ENCODE measurements at regions of chr1 and their contacts with region 1.

Region 1: DNA sequence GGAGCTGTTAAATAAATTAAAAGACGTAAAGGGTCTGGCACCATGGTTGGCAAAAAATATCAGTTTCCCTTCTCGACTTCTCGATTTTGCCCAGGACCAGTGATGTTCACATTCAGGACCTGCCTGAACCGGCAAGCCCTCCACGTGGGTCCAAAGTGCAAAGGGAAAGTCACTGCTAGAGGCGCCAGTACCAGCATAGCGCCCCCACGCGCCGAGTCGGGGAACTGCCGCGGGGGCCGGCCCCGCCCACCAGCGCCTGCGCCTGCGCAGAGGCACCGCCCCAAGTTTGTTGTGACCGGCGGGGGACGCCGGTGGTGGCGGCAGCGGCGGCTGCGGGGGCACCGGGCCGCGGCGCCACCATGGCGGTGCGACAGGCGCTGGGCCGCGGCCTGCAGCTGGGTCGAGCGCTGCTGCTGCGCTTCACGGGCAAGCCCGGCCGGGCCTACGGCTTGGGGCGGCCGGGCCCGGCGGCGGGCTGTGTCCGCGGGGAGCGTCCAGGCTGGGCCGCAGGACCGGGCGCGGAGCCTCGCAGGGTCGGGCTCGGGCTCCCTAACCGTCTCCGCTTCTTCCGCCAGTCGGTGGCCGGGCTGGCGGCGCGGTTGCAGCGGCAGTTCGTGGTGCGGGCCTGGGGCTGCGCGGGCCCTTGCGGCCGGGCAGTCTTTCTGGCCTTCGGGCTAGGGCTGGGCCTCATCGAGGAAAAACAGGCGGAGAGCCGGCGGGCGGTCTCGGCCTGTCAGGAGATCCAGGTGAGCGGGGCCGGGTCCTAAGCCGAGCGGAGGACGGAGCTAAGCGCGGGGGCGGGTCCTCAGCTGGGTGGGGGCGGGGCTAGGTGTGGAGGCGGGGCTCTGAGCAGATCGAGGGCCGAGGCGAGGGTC is at the start of gene PINK1:
- DNase-seq: peak; percentile 93
- H3K4me3 Mint-ChIP-seq: peak within 1 kb of the TSS; percentile 79
- H3K27ac Mint-ChIP-seq: peak within 1 kb of the TSS; percentile 33
- H3K4me1 Mint-ChIP-seq: peaks cover 10% of the 10 kb centered on the region
- H3K27me3 Mint-ChIP-seq: peaks cover 2% of the 10 kb centered on the region
- total RNA-seq, gene PINK1: 4.4 to 4.8 TPM

Region 2: DNA sequence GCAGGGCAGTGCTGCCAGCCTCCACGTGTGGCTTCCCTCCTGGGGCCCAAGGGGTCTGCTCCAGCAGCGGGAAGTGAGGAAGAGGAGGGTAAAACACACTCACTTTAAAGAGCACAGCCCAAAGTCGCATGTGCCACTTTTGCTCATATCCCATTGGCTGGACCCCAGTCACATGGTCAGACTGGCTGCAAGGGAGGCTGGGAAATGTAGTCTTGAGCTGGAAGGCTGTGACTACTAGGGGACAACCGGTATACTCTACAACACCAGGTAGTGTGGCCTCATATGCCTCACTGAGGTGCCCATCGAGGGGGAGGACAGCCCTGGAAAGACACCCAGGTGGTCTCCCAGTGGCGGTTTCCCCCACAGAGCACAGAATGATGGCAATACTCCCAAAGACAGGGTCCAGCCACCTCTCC is 192.6 kb before region 1 on chr1:
- CTCF ChIA-PET with region 1: no interaction called
- POLR2A ChIA-PET with region 1: no interaction called
- intact Hi-C with region 1: no loop called
- DNase-seq: peak; percentile 68
- H3K4me3 Mint-ChIP-seq: no peak overlapping the region
- H3K27ac Mint-ChIP-seq: no peak overlapping the region
- H3K4me1 Mint-ChIP-seq: no peaks in the 10 kb centered on the region
- H3K27me3 Mint-ChIP-seq: peaks cover 12% of the 10 kb centered on the region

Region 3: GRCh38 chr1:20507564-20508410 is 125.6 kb before region 1 on chr1 and contains the start of gene MUL1:
- CTCF ChIA-PET with region 1: no interaction called
- POLR2A ChIA-PET with region 1: no interaction called
- intact Hi-C with region 1: loop called (anchors 5 kb)
- DNase-seq: peak; percentile 97
- H3K4me3 Mint-ChIP-seq: peak within 1 kb of the TSS; percentile 89
- H3K27ac Mint-ChIP-seq: peak within 1 kb of the TSS; percentile 78
- H3K4me1 Mint-ChIP-seq: peaks cover 16% of the 10 kb centered on the region
- H3K27me3 Mint-ChIP-seq: peaks cover under 1% of the 10 kb centered on the region
- total RNA-seq, gene MUL1: 16.3 to 16.7 TPM

Region 4: DNA sequence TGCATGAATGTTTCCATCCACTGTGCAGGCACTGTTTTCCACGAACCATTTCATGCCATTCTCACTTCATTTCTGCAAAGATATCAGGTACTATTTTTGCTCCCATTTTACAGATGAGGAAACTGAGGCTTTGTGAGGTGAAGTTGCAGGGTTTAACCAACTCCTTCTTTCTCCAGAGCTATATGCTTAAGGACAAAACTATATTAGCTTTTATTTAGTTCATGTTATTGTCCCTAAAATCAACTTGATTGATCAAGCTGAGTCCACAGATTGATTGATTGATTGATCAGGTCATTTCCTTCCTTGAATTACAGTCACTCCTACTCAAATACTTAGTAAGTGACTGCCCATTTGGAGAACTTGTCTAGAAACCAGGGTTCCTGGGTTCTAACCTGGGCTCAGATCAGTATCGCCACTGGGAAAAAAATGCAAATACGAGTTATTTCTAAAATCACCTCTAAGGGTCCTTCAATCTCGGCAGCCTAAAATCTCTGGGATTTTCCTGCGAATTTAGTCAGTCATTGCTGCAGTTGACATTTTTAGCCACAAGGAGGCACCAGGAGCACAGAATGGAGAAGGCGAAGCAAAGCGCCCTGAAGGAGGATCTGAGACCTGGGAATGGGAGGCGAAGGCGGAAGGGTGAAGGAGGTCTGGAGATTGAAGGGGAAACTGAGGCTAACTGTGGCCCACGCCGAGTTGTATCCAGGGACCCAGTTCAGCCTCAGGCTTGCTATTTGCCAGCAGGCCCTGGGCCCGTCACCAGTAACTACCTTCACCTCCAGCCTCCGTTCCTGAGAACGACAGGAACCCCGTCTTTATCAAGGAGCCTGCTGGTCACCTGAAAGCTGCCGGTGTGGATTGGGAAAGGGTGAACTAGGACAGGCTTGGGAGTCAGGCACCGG is 111.2 kb before region 1 on chr1:
- CTCF ChIA-PET with region 1: interaction called, 32 read pairs
- POLR2A ChIA-PET with region 1: no interaction called
- intact Hi-C with region 1: no loop called
- DNase-seq: peak; percentile 72
- H3K4me3 Mint-ChIP-seq: no peak overlapping the region
- H3K27ac Mint-ChIP-seq: no peak overlapping the region
- H3K4me1 Mint-ChIP-seq: no peaks in the 10 kb centered on the region
- H3K27me3 Mint-ChIP-seq: peaks cover 5% of the 10 kb centered on the region

Region 5: GRCh38 chr1:20574686-20575540 is 58.5 kb before region 1 on chr1:
- CTCF ChIA-PET with region 1: interaction called, 75 read pairs
- POLR2A ChIA-PET with region 1: no interaction called
- intact Hi-C with region 1: no loop called
- DNase-seq: peak; percentile 86
- H3K4me3 Mint-ChIP-seq: no peak overlapping the region
- H3K27ac Mint-ChIP-seq: no peak overlapping the region
- H3K4me1 Mint-ChIP-seq: no peaks in the 10 kb centered on the region
- H3K27me3 Mint-ChIP-seq: peaks cover 10% of the 10 kb centered on the region

Region 6: GRCh38 chr1:20645414-20645813 is 12.0 kb after region 1 on chr1:
- CTCF ChIA-PET with region 1: interaction called, 16 read pairs
- POLR2A ChIA-PET with region 1: interaction called, 3 read pairs
- intact Hi-C with region 1: no loop called
- DNase-seq: no peak
- H3K4me3 Mint-ChIP-seq: no peak overlapping the region
- H3K27ac Mint-ChIP-seq: no peak overlapping the region
- H3K4me1 Mint-ChIP-seq: no peaks in the 10 kb centered on the region
- H3K27me3 Mint-ChIP-seq: no peaks in the 10 kb centered on the region

Region 7: DNA sequence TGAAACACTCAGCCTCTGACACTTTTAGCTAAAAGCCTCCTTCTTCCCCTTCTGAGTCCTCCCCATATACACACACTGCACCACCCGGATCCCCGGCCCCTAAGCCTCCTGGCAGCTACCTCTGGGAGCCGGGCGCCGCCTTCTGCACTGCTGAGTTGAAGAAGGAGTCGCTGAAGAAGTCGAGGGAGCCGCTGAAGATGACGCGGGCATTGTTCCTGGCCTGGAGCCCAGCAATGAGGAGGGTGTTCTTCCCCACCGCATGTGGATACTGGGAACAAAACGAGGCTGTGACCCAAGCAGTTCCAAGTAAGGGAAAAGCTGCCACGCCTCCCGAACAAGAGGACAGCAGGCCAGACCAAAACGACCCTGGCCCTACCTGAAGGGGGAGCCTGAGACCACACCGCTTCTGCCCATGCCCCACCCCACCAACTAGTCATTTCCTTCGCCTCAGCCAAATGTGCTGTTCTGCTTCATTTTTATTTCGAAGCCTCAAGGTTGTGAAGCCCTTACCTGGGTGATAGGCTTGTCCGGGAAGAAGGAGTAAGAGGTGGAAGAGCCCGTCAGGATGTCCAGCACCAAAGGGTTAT is 20.8 kb after region 1 on chr1:
- CTCF ChIA-PET with region 1: interaction called, 11 read pairs
- POLR2A ChIA-PET with region 1: no interaction called
- intact Hi-C with region 1: no loop called
- DNase-seq: no peak
- H3K4me3 Mint-ChIP-seq: no peak overlapping the region
- H3K27ac Mint-ChIP-seq: no peak overlapping the region
- H3K4me1 Mint-ChIP-seq: peaks cover 20% of the 10 kb centered on the region
- H3K27me3 Mint-ChIP-seq: no peaks in the 10 kb centered on the region

Region 8: GRCh38 chr1:20661207-20662109 is 28.0 kb after region 1 on chr1 and contains the start of gene DDOST:
- CTCF ChIA-PET with region 1: interaction called, 14 read pairs
- POLR2A ChIA-PET with region 1: no interaction called
- intact Hi-C with region 1: no loop called
- DNase-seq: peak; percentile 98
- H3K4me3 Mint-ChIP-seq: peak within 1 kb of the TSS; percentile 100
- H3K27ac Mint-ChIP-seq: peak within 1 kb of the TSS; percentile 98
- H3K4me1 Mint-ChIP-seq: peaks cover 46% of the 10 kb centered on the region
- H3K27me3 Mint-ChIP-seq: no peaks in the 10 kb centered on the region
- total RNA-seq, gene DDOST: 165 to 180 TPM